Right ventricle myocardium superior (tissue), 1 donor: ENCODE measurements at regions of chr17 and their contacts with region 1.

Region 1: DNA sequence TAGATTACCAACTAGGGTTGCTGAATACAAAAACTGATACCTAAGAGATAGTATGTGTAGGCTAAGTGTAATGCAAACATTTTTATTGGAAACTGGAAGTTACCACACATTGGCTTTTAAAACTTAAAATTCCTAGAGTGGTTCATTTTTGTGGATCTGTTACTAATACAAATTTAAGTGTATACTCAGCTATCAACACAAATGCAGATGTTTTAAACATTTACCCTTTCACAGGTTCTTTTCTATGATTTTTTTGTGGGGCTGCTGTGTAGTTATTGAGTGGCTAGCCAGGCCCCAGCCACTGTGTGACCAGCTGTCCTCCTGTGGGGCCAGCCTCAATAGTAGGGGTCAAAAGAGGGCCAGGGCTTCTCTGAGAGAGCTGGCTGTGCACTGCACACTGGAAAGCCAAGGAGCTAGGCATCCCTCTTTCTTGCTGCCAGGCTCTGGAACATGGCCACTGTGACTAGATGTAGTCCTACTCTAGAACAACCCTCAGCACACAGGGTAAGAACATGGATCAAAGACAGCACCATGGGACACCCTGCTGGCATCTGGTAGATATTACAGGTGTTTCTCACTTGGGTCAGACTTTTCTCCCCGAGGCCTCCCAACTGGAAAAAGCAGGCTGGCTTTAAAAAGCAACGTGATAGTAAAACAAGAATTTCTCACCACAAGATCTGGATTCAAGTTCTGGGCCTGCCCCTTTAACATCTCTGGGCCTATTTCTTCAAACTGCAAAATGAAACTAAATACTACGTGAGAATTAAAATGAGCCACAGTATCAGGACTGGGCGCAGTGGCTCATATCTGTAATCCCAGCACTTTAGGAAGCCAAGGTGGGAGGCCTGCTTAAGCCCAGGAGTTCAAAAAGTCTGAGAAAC is 7.3 kb upstream of the VEZF1 start:
- DNase-seq: peak; percentile 67
- ATAC-seq: peak; percentile 89

Region 2: GRCh38 chr17:57855391-57856035 is 139.8 kb before region 1 on chr17:
- intact Hi-C with region 1: loop called (anchors 2 kb)
- DNase-seq: no peak
- ATAC-seq: no peak

Region 3: DNA sequence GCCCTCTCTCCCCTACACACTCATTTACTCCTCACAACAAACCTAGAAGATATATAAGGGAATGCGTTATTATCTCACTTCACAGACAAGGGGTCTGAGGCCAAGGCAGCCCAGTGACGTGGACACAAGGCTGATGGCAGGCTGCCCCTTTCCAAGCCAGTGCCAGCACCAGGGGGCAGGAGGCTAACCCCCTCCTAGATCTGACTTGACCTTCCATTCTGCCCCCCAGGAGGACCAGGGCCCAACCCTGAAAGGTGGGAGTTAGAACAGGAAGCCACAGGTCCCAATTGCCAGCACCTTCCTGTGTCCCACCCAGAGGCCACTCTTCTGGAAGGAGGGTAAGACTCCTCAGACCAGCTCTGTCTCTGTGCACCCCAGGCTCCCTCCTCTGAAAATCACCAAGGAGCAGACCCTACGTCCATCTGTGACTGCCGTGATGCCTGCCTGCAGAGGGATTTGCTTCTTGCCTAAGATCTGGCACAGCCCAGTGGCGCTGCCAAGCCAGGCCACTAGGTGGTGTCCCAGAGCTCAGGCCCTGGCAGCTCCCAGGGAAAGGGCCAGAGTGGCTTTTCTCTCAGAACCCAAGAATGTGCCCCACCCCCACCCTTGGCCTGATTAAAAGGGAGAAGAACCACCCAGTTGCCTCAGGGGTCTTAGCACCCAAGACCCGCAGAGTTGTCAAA is 103.0 kb before region 1 on chr17:
- intact Hi-C with region 1: no loop called
- DNase-seq: peak; percentile 94
- ATAC-seq: peak; percentile 52